Dorsolateral prefrontal cortex (tissue), 120 donors: ENCODE measurements at regions of chr5 and their contacts with region 1.

Region 1: DNA sequence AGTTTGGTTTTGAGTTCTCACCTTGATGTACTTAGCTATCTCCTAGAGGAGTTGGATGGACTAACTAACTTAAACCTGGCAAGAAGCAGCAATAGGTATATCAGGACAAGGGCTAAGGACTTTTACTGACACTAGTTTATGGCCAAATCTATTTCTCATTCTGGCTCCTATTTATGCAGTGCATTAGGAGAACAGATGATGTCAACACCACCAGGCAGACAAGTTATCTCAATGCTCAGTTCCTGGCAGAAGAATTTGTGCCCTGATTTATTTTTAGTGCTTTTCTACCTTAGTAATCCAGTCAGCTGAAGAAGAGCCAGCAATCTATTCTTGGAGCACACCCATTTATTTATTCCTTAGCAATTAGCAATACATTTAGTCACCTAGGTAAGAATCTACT is 30.7 kb upstream of the MYOT start:
- DNase-seq: peak in 1 of 10 donors; percentile 40
- H3K4me3 ChIP-seq: no peak overlapping the region
- H3K27ac ChIP-seq: peak overlapping the region; percentile 12 to 92 (median 77)
- H3K27me3 ChIP-seq: no peaks in the 10 kb centered on the region
- CTCF ChIP-seq: no peak

Region 2: GRCh38 chr5:137880313-137880712 is 43.3 kb after region 1 on chr5:
- intact Hi-C with region 1: loop called in 1 of 2 experiments (anchors 5 kb)
- DNase-seq: peak in 1 of 10 donors; percentile 42
- H3K4me3 ChIP-seq: peak overlapping the region in 50 of 59 donors; percentile 6 to 66 (median 42)
- H3K27ac ChIP-seq: peak overlapping the region; percentile 59 to 100 (median 95)
- H3K27me3 ChIP-seq: no peaks in the 10 kb centered on the region
- CTCF ChIP-seq: peak in 7 of 56 donors; percentile 7 to 34 (median 11)